Posterior cingulate gyrus (tissue), 11 donors: ENCODE measurements at regions of chr12 and their contacts with region 1.

Region 1: GRCh38 chr12:131608740-131609690 is 101.9 kb upstream of the SFSWAP start:
- DNase-seq: peak; percentile 79 to 98 (median 88)

Region 2: DNA sequence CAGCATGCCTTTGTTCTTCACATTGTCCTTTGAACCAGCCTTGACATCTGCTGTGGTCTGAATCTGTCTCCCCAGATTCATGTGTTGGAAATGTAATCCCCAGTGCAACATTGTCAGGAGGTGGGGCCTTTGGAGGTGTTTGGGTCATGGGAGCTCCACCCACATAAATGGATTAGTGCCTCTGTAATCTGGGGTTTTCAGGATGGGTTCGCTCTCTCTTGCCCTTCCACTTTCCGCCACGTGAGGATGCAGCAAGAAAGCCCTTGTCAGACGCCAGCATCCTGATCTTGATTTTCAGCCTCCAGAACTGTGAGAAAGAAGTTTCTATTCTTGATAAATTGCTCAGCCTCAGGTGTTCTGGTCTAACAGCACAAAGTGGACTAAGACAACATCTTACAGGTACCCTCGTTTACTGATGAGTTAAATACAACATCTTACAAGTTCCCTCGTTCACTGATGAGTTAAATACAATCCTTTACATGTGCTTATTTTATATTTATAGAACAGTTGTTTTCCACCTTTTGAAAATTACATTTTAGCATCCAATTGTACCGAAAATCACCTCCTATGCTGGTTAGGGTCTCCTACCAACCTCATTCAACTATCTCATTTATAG is 838.5 kb before region 1 on chr12:
- intact Hi-C with region 1: loop called (anchors 5 kb)
- DNase-seq: peak in 1 of 10 donors; percentile 27

Region 3: GRCh38 chr12:131710464-131711457 is 101.7 kb after region 1 on chr12 and contains the start of gene SFSWAP:
- intact Hi-C with region 1: loop called (anchors 2 kb)
- DNase-seq: peak; percentile 72 to 97 (median 77)